Caco-2 (cell line): ENCODE measurements at regions of chr4 and their contacts with region 1.

Region 1: GRCh38 chr4:88054901-88055300 is 47.5 kb downstream of the PKD2 start:
- DNase-seq: peak; percentile 71
- H3K4me3 ChIP-seq: no peak overlapping the region
- H3K4me3 Mint-ChIP-seq: no peak overlapping the region
- H3K27ac Mint-ChIP-seq: no peak overlapping the region
- H3K4me1 ChIP-seq: no peaks in the 10 kb centered on the region
- H3K4me1 Mint-ChIP-seq: peaks cover 6% of the 10 kb centered on the region
- H3K27me3 ChIP-seq: no peaks in the 10 kb centered on the region
- H3K27me3 Mint-ChIP-seq: no peaks in the 10 kb centered on the region
- CTCF ChIP-seq: peak; percentile 63 to 80

Region 2: GRCh38 chr4:88033309-88033708 is 21.6 kb before region 1 on chr4:
- CTCF ChIA-PET with region 1: interaction called, 8 read pairs
- POLR2A ChIA-PET with region 1: no interaction called
- intact Hi-C with region 1: loop called (anchors 1 kb)
- DNase-seq: peak; percentile 58 to 70
- H3K4me3 ChIP-seq: no peak overlapping the region
- H3K4me3 Mint-ChIP-seq: no peak overlapping the region
- H3K27ac Mint-ChIP-seq: no peak overlapping the region
- H3K4me1 ChIP-seq: no peaks in the 10 kb centered on the region
- H3K4me1 Mint-ChIP-seq: no peaks in the 10 kb centered on the region
- H3K27me3 ChIP-seq: no peaks in the 10 kb centered on the region
- H3K27me3 Mint-ChIP-seq: no peaks in the 10 kb centered on the region
- CTCF ChIP-seq: peak; percentile 68

Region 3: GRCh38 chr4:88189881-88190532 is 135.1 kb after region 1 on chr4:
- CTCF ChIA-PET with region 1: no interaction called
- POLR2A ChIA-PET with region 1: no interaction called
- intact Hi-C with region 1: loop called (anchors 5 kb)
- DNase-seq: peak; percentile 50 to 72
- H3K4me3 ChIP-seq: no peak overlapping the region
- H3K4me3 Mint-ChIP-seq: peak overlapping the region; percentile 34
- H3K27ac Mint-ChIP-seq: peak overlapping the region; percentile 50
- H3K4me1 ChIP-seq: peaks cover 23% of the 10 kb centered on the region
- H3K4me1 Mint-ChIP-seq: peaks cover 21% of the 10 kb centered on the region
- H3K27me3 ChIP-seq: no peaks in the 10 kb centered on the region
- H3K27me3 Mint-ChIP-seq: no peaks in the 10 kb centered on the region
- CTCF ChIP-seq: no peak